Activated CD4-positive, alpha-beta T cell treated with anti-CD3 and anti-CD28 coated beads, Interleukin-2, amount 10 ng/mL, durations not matched to agents 24 days and 14 days (primary cell): ENCODE measurements at regions of chr6 and their contacts with region 1.

Region 1: GRCh38 chr6:143450453-143451371 is at the starts of genes ADAT2 and PEX3:
- DNase-seq: peak; percentile 98
- H3K4me3 Mint-ChIP-seq: peak within 1 kb of the TSS; percentile 91
- H3K27ac Mint-ChIP-seq: peak within 1 kb of the TSS; percentile 99
- H3K4me1 Mint-ChIP-seq: peaks cover 36% of the 10 kb centered on the region
- H3K27me3 Mint-ChIP-seq: no peaks in the 10 kb centered on the region
- total RNA-seq, gene ADAT2: 46.0 and 47.7 TPM in 2 replicates
- total RNA-seq, gene PEX3: 26.0 and 28.5 TPM in 2 replicates

Region 2: DNA sequence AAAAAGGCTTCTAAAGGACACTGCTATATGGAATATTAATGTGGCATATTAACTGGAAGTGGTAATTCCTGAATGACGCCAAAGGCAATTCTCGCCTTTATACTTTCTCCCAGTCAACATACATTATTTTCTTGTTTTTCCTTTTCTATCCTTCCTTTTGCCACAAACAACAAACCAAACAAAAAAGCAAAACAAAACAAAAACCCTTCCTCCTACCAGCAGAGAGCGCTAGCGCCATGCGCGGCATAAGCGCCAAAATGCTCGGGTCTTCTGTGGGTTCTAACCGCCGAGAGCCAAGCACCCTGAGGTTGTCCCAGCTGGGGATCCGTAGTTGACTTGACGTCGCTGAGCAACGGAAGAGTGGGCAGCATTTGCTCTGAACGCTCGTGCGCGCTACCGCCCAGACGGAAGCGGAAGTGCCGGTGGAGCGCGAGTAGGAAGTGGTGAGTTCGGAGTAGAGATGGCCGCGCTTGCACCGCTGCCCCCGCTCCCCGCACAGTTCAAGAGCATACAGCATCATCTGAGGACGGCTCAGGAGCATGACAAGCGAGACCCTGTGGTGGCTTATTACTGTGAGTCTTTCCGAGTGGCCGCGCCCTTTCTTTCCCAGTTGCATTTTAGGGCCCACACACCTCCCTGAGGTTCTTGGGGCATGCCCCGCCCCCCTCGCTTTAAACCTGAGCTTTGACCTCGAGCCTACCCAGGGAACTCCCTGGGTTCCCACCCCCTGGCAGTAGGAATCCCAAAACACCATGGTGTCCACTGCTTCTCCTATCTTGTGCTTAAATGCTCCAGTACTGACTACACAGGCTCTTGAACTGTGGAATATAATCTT is 1303.7 kb before region 1 on chr6 and contains the starts of genes NMBR and VTA1:
- intact Hi-C with region 1: loop called (anchors 5 kb)
- DNase-seq: peak; percentile 99
- H3K4me3 Mint-ChIP-seq: peak within 1 kb of the TSS; percentile 96
- H3K27ac Mint-ChIP-seq: peak within 1 kb of the TSS; percentile 91
- H3K4me1 Mint-ChIP-seq: peaks cover 40% of the 10 kb centered on the region
- H3K27me3 Mint-ChIP-seq: no peaks in the 10 kb centered on the region
- total RNA-seq, gene NMBR: not detected in 2 replicates
- total RNA-seq, gene VTA1: 52.6 and 54.0 TPM in 2 replicates

Region 3: GRCh38 chr6:142395768-142396231 is 1054.9 kb before region 1 on chr6:
- intact Hi-C with region 1: loop called (anchors 10 kb)
- DNase-seq: peak; percentile 77
- H3K4me3 Mint-ChIP-seq: peak overlapping the region; percentile 36
- H3K27ac Mint-ChIP-seq: peak overlapping the region; percentile 8
- H3K4me1 Mint-ChIP-seq: peaks cover 13% of the 10 kb centered on the region
- H3K27me3 Mint-ChIP-seq: peaks cover 48% of the 10 kb centered on the region

Region 4: DNA sequence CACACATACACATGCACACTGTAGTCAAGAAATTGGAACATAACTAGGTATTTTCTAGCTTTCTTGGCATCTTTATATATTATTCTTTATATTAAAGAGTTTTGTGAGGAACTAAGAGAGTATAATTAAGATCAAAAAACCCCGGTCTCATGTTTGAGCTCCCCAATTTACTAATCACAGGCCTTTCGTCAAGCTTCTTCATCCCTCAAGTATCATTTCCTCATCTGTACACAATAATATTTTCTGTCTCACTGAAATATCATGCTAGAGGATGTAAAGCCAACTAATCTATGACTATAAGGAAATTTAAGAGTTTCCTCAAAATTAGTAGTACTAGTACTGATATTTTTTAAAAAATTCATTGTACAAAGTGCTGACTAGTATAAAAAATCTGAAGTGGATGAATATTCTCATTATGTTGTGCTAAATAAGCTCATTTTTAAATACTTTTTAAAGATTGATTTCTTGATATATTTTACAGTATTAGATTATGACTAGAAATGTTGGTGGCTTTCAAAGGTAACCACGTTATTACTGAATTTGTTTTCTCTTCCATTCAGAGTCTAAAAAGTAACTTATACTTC is 27.9 kb after region 1 on chr6:
- intact Hi-C with region 1: no loop called
- DNase-seq: no peak
- H3K4me3 Mint-ChIP-seq: no peak overlapping the region
- H3K27ac Mint-ChIP-seq: no peak overlapping the region
- H3K4me1 Mint-ChIP-seq: no peaks in the 10 kb centered on the region
- H3K27me3 Mint-ChIP-seq: no peaks in the 10 kb centered on the region

Region 5: GRCh38 chr6:143510991-143511891 is 60.5 kb after region 1 on chr6 and contains the start of gene FUCA2:
- intact Hi-C with region 1: loop called (anchors 1 kb)
- DNase-seq: peak; percentile 92
- H3K4me3 Mint-ChIP-seq: peak within 1 kb of the TSS; percentile 97
- H3K27ac Mint-ChIP-seq: peak within 1 kb of the TSS; percentile 99
- H3K4me1 Mint-ChIP-seq: peaks cover 34% of the 10 kb centered on the region
- H3K27me3 Mint-ChIP-seq: no peaks in the 10 kb centered on the region
- total RNA-seq, gene FUCA2: 14.4 and 16.1 TPM in 2 replicates

Region 6: DNA sequence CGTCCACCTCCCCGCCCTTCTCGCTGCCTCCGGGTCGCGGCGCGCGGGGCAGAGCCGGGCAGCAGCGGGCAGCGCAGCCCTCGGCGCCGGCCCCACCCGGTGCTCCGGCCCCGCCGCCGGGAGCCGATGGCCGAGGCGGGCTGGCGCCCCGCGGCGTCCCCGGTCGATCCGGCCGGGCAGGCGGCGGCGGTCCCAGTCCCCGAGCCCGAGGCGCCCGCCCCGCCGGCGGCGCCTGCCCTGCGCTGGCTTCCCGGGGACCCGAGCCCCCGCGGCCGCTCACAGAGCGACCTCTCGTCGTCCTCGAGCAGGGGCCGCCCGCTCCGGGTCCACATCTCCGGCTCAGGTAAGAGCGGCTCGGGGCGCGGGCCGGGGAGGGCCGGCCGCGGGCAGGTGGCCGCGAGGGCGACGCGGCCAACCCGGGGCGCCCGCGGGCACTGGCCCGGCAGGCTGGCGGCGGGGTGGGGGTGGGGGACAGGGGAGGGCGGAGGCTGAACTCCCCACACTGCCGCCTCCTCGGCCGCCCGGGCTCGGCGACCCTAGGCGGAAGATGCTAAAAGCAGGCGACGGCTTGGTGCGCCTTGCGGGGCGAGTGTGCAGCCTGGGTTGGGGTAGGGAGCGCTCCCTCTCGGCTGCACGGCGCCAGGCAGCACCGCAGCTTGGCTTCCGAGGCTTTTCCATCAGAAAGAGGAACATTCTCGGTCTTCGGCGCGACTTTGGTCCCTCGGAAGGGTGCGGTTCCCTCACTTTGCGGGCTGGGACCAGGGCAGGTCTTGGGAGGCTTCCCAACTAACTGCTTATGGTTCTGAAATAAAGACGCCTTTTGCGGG is 86.4 kb after region 1 on chr6:
- intact Hi-C with region 1: loop called (anchors 2 kb)
- DNase-seq: peak; percentile 90
- H3K4me3 Mint-ChIP-seq: peak overlapping the region; percentile 88
- H3K27ac Mint-ChIP-seq: peak overlapping the region; percentile 76
- H3K4me1 Mint-ChIP-seq: peaks cover 37% of the 10 kb centered on the region
- H3K27me3 Mint-ChIP-seq: no peaks in the 10 kb centered on the region

Region 7: DNA sequence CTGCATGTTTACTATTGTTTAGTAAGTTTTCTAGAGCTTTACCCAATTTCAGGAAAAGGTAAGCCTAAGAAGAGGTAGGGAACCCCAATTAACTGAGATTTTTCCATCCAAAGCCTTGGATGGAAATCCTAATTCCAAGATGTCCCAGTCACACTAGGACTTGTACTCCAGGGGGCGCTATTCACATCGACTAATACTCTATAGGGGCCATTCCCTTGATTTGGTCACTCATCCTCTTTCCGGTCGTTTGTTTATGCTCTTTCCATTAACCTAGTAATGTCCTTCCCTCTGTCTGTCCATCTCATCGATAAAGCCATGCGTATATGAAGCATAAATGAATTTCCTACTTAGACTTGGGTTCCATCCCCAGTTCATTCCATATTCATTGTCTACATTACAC is 141.6 kb after region 1 on chr6:
- intact Hi-C with region 1: no loop called
- DNase-seq: no peak
- H3K4me3 Mint-ChIP-seq: no peak overlapping the region
- H3K27ac Mint-ChIP-seq: no peak overlapping the region
- H3K4me1 Mint-ChIP-seq: peaks cover 5% of the 10 kb centered on the region
- H3K27me3 Mint-ChIP-seq: no peaks in the 10 kb centered on the region

Region 8: GRCh38 chr6:143607974-143608373 is 157.3 kb after region 1 on chr6:
- intact Hi-C with region 1: no loop called
- DNase-seq: no peak
- H3K4me3 Mint-ChIP-seq: no peak overlapping the region
- H3K27ac Mint-ChIP-seq: no peak overlapping the region
- H3K4me1 Mint-ChIP-seq: peaks cover 6% of the 10 kb centered on the region
- H3K27me3 Mint-ChIP-seq: no peaks in the 10 kb centered on the region

Region 9: DNA sequence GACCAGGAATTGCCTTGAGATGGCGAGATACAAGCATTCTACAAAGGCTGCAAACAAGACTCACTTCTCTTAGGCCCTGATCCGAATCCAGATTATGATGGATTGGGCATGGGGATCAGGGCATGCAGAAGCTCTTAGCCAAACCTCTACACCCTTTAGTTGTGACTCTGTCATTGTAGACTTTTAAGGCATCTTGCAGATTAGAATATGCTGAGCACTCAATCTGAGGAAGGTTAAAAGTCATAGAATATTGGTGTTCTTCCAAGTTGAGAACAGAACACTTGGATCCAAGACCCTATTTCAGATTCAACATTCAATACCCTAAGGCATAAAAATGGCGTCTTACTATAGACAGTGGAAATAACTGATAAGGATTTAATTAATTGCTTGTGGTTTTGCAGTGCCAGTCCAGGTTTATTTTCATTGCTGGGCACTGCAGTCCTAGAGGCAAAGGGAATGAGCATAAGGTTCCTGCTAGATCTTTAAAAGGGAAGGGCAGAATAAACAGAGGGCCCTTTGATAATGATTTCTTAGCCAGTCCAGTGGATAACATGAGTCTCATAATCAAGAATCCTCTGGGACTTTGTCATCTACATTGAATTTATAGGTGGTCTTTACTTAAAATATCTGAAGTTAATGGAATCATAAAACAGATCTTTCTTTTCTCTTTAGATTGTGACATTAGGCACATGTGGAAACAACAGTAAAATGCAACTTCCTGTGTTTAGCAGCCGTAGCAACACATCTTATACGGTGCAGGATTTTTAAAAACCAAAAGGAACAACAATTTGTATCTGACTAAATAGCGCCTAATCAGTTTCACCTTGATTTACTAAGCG is 244.6 kb after region 1 on chr6:
- intact Hi-C with region 1: no loop called
- DNase-seq: no peak
- H3K4me3 Mint-ChIP-seq: no peak overlapping the region
- H3K27ac Mint-ChIP-seq: no peak overlapping the region
- H3K4me1 Mint-ChIP-seq: peaks cover 31% of the 10 kb centered on the region
- H3K27me3 Mint-ChIP-seq: no peaks in the 10 kb centered on the region

Region 10: GRCh38 chr6:144063744-144064401 is 613.2 kb after region 1 on chr6:
- intact Hi-C with region 1: loop called (anchors 1 kb)
- DNase-seq: peak; percentile 97
- H3K4me3 Mint-ChIP-seq: peak overlapping the region; percentile 92
- H3K27ac Mint-ChIP-seq: peak overlapping the region; percentile 91
- H3K4me1 Mint-ChIP-seq: peaks cover 41% of the 10 kb centered on the region
- H3K27me3 Mint-ChIP-seq: no peaks in the 10 kb centered on the region